CD4-positive, alpha-beta memory T cell (primary cell): ENCODE measurements at regions of chr9 and their contacts with region 1.

Region 1: GRCh38 chr9:100216178-100216787 is 117.2 kb downstream of the INVS start:
- DNase-seq: peak; percentile 39 to 51 (median 43)
- H3K4me3 ChIP-seq: no peak overlapping the region
- H3K4me3 Mint-ChIP-seq: no peak overlapping the region
- H3K27ac ChIP-seq: no peak overlapping the region
- H3K27ac Mint-ChIP-seq: no peak overlapping the region
- H3K4me1 ChIP-seq: no peaks in the 10 kb centered on the region
- H3K4me1 Mint-ChIP-seq: no peaks in the 10 kb centered on the region
- H3K27me3 ChIP-seq: no peaks in the 10 kb centered on the region
- H3K27me3 Mint-ChIP-seq: no peaks in the 10 kb centered on the region

Region 2: GRCh38 chr9:100186356-100186755 is 29.9 kb before region 1 on chr9:
- CTCF ChIA-PET with region 1: no interaction called
- POLR2A ChIA-PET with region 1: no interaction called
- intact Hi-C with region 1: no loop called
- DNase-seq: no peak
- H3K4me3 ChIP-seq: no peak overlapping the region
- H3K4me3 Mint-ChIP-seq: no peak overlapping the region
- H3K27ac ChIP-seq: no peak overlapping the region
- H3K27ac Mint-ChIP-seq: no peak overlapping the region
- H3K4me1 ChIP-seq: no peaks in the 10 kb centered on the region
- H3K4me1 Mint-ChIP-seq: peaks cover 0 to 6% (median 3%) of the 10 kb centered on the region in 4 donors
- H3K27me3 ChIP-seq: no peaks in the 10 kb centered on the region
- H3K27me3 Mint-ChIP-seq: no peaks in the 10 kb centered on the region

Region 3: GRCh38 chr9:100204796-100205195 is 11.5 kb before region 1 on chr9:
- CTCF ChIA-PET with region 1: interaction called, 10 read pairs
- POLR2A ChIA-PET with region 1: no interaction called
- intact Hi-C with region 1: no loop called
- DNase-seq: no peak
- H3K4me3 ChIP-seq: no peak overlapping the region
- H3K4me3 Mint-ChIP-seq: no peak overlapping the region
- H3K27ac ChIP-seq: no peak overlapping the region
- H3K27ac Mint-ChIP-seq: no peak overlapping the region
- H3K4me1 ChIP-seq: peaks cover 7% of the 10 kb centered on the region
- H3K4me1 Mint-ChIP-seq: peaks cover 2 to 3% (median 2%) of the 10 kb centered on the region in 4 donors
- H3K27me3 ChIP-seq: no peaks in the 10 kb centered on the region
- H3K27me3 Mint-ChIP-seq: no peaks in the 10 kb centered on the region